K562 (cell line): ENCODE measurements at regions of chrX and their contacts with region 1.

Region 1: DNA sequence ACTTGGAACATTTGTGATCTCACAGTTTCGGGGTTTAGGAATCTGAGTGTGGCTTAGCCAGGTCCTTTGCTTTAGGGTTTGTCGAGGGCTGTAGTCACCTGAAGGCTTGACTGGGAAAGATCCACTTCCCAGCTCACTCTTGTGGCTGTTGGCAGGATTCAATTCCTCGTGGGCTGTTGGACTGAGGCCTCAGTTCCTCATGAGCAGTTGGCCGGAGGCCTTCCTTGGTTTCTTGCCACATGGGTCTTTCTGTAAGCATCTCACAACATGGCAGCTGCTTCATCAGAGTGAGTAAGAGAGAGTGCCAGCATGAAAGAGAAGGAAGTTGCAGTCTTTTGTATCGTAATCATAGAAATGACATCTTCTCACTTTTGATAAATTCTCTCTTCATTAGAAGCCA is 11.1 kb downstream of the TXLNG start:
- DNase-seq: no peak
- ATAC-seq: no peak
- H3K4me3 ChIP-seq: no peak overlapping the region
- H3K27ac ChIP-seq: no peak overlapping the region
- H3K4me1 ChIP-seq: no peaks in the 10 kb centered on the region; a peak in 2 of 5 replicates
- H3K27me3 ChIP-seq: no peaks in the 10 kb centered on the region
- CTCF ChIP-seq: no peak
- EP300 ChIP-seq: no peak
- POLR2A ChIP-seq: no peak
- RAD21 ChIP-seq: no peak

Region 2: DNA sequence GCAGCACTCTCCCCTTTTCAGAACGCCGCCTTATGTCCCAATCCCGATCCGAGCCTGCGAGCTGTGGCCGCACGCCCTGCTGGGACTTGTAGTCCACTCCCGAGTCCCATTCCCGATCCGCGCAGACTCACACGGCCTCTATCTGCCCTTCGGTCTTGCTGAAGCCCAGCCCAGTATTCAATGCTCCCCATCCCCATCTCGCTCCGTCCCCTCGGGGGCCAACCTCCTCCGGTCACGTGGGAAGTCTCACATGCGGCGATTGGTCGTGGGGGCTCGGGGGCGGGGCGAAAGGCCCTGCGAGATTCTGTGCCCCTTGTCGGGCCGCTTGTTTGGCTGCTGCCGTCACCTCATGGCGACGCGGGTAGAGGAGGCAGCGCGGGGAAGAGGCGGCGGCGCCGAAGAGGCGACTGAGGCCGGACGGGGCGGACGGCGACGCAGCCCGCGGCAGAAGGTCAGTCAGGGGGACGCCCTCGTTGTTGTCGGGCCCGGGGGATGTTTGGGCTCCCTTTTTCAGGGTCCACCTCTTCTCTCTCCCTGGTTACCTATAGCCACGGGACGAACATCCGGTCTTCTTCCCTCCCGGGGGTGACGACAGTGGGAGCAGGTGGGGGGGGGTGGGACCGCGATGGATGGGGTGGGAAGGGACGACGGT is 11.1 kb before region 1 on chrX and contains the start of gene TXLNG:
- CTCF ChIA-PET with region 1: no interaction called
- POLR2A ChIA-PET with region 1: interaction called, 12 read pairs
- in situ Hi-C with region 1: no loop called
- intact Hi-C with region 1: no loop called
- DNase-seq: peak; percentile 90 to 99 (median 94)
- ATAC-seq: peak; percentile 98
- H3K4me3 ChIP-seq: peak within 1 kb of the TSS; percentile 80
- H3K27ac ChIP-seq: peak within 1 kb of the TSS; percentile 90
- H3K4me1 ChIP-seq: peaks cover 7 to 10% of the 10 kb centered on the region in 2 experiments; a peak in 3 of 5 replicates
- H3K27me3 ChIP-seq: no peaks in the 10 kb centered on the region
- CTCF ChIP-seq: no peak
- EP300 ChIP-seq: no peak
- POLR2A ChIP-seq: peak; percentile 92
- RAD21 ChIP-seq: no peak
- polyA plus RNA-seq, gene TXLNG: 13.1 to 21.4 TPM

Region 3: GRCh38 chrX:16807548-16807947 is 10.2 kb after region 1 on chrX:
- CTCF ChIA-PET with region 1: no interaction called
- POLR2A ChIA-PET with region 1: interaction called, 15 read pairs
- in situ Hi-C with region 1: no loop called
- intact Hi-C with region 1: no loop called
- DNase-seq: no peak
- ATAC-seq: peak; percentile 49
- H3K4me3 ChIP-seq: no peak overlapping the region
- H3K27ac ChIP-seq: peak overlapping the region; percentile 45; the same call in 1 of the 3 replicates
- H3K4me1 ChIP-seq: peaks cover 4 to 8% of the 10 kb centered on the region in 2 experiments; a peak in 4 of 5 replicates
- H3K27me3 ChIP-seq: no peaks in the 10 kb centered on the region
- CTCF ChIP-seq: no peak
- EP300 ChIP-seq: no peak
- POLR2A ChIP-seq: no peak
- RAD21 ChIP-seq: no peak